Calu3 (cell line): ENCODE measurements at regions of chr4 and their contacts with region 1.

Region 1: DNA sequence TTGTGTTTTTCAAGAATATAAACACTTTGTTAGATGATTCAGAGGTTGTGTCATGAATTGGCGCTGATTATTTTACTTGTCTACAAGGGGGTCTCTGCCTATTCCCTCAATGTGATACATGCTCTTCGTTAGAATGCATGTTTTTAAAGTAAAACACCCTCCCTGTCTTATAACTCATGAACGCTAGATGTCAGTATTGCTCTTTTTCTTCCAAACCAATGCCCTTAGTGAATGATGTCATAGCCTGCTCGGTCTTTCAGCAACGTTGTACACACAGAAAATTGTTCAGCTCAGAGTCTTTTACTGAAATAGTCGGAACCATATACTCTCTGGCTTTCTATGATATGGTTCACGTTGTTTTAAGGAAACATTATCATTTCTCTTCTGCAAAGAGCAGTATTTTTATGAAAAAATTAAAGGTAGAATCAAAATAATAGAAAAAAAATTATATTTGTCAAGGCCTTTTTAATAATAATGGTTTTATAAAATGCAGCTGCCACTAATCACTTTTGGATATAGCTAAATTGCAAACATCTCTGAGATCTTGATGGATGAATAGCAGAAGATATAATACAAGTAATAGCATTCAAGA is 292.9 kb downstream of the TLL1 start:
- DNase-seq: peak; percentile 16
- H3K4me3 Mint-ChIP-seq: no peak overlapping the region
- H3K27ac Mint-ChIP-seq: no peak overlapping the region
- H3K4me1 Mint-ChIP-seq: no peaks in the 10 kb centered on the region
- H3K27me3 Mint-ChIP-seq: no peaks in the 10 kb centered on the region
- CTCF ChIP-seq: peak; percentile 16

Region 2: DNA sequence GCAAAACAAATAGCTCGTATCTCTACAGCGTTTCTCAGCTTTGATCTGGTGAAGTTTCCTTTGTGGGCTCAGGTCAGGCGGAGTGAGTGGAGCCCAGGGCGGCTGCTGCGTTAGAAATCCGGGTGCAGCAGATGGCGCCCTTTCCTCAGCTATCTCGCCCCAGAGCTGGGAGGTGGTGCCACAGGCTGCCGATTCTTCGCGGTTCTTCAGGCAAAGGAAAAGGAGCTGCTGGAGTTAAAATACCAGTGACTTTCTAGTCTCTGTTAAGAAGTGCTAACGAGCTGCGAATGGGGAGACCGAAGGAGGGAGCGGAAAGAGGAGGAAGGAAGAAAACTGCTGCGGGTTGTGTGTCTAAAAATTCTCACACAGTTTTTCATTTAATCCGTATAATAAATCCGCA is 672.6 kb before region 1 on chr4:
- CTCF ChIA-PET with region 1: no interaction called
- intact Hi-C with region 1: loop called (anchors 5 kb)
- DNase-seq: peak; percentile 73
- H3K4me3 Mint-ChIP-seq: peak overlapping the region; percentile 58
- H3K27ac Mint-ChIP-seq: no peak overlapping the region
- H3K4me1 Mint-ChIP-seq: peaks cover 8% of the 10 kb centered on the region
- H3K27me3 Mint-ChIP-seq: no peaks in the 10 kb centered on the region
- CTCF ChIP-seq: peak; percentile 56

Region 3: DNA sequence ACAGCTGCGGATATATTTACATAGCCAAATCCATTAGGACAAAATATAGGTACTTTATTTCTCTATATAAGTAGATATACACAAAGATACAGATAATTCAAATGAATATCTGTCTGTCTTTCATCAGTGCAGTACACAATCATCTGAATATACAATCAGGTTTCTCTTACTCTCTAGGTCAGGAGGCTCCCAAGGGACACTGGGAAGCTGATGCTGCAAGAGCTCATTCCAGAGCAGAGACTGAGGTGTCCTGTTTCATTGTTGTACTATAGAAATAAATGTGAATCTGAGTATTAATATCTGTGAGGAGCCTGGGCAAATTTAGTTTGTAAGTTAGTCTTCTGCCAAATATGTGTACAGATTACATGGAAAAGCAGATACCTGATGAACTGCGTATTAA is 288.6 kb before region 1 on chr4:
- CTCF ChIA-PET with region 1: no interaction called
- intact Hi-C with region 1: no loop called
- DNase-seq: no peak
- H3K4me3 Mint-ChIP-seq: no peak overlapping the region
- H3K27ac Mint-ChIP-seq: no peak overlapping the region
- H3K4me1 Mint-ChIP-seq: no peaks in the 10 kb centered on the region
- H3K27me3 Mint-ChIP-seq: no peaks in the 10 kb centered on the region
- CTCF ChIP-seq: no peak

Region 4: GRCh38 chr4:166252487-166253402 is 86.8 kb after region 1 on chr4:
- CTCF ChIA-PET with region 1: no interaction called
- intact Hi-C with region 1: loop called (anchors 1 kb)
- DNase-seq: peak; percentile 17
- H3K4me3 Mint-ChIP-seq: no peak overlapping the region
- H3K27ac Mint-ChIP-seq: no peak overlapping the region
- H3K4me1 Mint-ChIP-seq: no peaks in the 10 kb centered on the region
- H3K27me3 Mint-ChIP-seq: no peaks in the 10 kb centered on the region
- CTCF ChIP-seq: peak; percentile 41

Region 5: DNA sequence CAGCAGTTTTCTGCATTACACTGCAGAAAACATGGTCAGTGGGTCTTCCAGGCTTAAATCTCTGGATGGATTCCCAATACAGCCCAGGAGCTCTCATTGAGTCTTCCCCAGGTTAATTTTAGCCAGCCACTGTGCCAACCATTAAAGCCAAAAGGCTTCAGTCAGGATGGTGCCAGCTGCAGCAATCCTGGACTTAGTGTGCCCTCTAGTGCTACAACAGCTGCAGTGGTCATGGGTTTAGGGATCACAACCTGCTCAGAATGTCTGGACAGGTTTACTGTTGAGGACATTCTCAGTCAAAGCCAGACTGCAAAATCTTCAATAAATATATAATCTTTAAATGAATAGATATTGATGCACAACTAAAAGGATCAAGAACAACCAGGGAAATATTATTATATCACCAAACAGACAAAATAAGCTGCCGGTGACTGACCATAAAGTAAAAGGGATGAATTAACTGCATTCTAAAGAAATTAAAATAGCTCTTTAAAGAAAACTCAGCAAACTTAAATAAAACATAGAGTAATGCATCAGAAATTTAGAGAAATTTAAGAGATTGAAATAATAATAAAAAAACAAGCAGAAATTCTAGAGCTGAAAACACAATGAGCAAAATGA is 428.5 kb after region 1 on chr4:
- CTCF ChIA-PET with region 1: interaction called, 12 read pairs
- intact Hi-C with region 1: loop called (anchors 1 kb)
- DNase-seq: peak; percentile 41
- H3K4me3 Mint-ChIP-seq: no peak overlapping the region
- H3K27ac Mint-ChIP-seq: no peak overlapping the region
- H3K4me1 Mint-ChIP-seq: no peaks in the 10 kb centered on the region
- H3K27me3 Mint-ChIP-seq: no peaks in the 10 kb centered on the region
- CTCF ChIP-seq: peak; percentile 53

Region 6: DNA sequence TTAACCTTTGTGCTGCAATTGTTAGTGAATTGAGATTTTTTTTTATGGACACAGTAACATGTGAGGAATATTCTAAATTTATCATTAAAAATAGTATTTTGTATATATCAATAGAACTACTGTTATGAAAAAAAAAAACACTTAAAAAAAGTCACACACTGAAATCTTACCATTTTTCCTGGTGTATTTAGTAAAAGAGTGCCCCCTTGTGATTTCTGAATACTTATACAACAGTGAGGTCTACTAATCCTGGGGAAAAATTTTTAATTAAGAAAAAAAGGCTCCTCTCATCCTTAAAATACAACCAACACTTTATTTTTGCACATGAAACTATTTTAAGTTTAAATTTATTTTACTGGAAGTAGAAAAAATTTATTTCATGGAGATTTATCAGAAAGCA is 1124.8 kb after region 1 on chr4:
- CTCF ChIA-PET with region 1: no interaction called
- intact Hi-C with region 1: loop called (anchors 10 kb)
- DNase-seq: no peak
- H3K4me3 Mint-ChIP-seq: no peak overlapping the region
- H3K27ac Mint-ChIP-seq: no peak overlapping the region
- H3K4me1 Mint-ChIP-seq: no peaks in the 10 kb centered on the region
- H3K27me3 Mint-ChIP-seq: no peaks in the 10 kb centered on the region
- CTCF ChIP-seq: no peak

Region 7: GRCh38 chr4:168153596-168154440 is 1987.9 kb after region 1 on chr4:
- CTCF ChIA-PET with region 1: no interaction called
- intact Hi-C with region 1: loop called (anchors 5 kb)
- DNase-seq: peak; percentile 74
- H3K4me3 Mint-ChIP-seq: peak overlapping the region; percentile 35
- H3K27ac Mint-ChIP-seq: peak overlapping the region; percentile 37
- H3K4me1 Mint-ChIP-seq: peaks cover 20% of the 10 kb centered on the region
- H3K27me3 Mint-ChIP-seq: no peaks in the 10 kb centered on the region
- CTCF ChIP-seq: peak; percentile 54